ENCODE measurements at regions of chr13 and their contacts with region 1.

Region 1: GRCh38 chr13:92806215-92806614 is 420.4 kb upstream of the GPC6 start:
- DNase-seq: no peak
- H3K4me3 ChIP-seq: no peak overlapping the region
- H3K27ac ChIP-seq: no peak overlapping the region
- H3K4me1 ChIP-seq: peaks cover 3% of the 10 kb centered on the region
- H3K27me3 ChIP-seq: no peaks in the 10 kb centered on the region
- CTCF ChIP-seq: no peak

Region 2: GRCh38 chr13:92716749-92717148 is 89.5 kb before region 1 on chr13:
- CTCF ChIA-PET with region 1: no interaction called
- dilution Hi-C with region 1: no loop called
- in situ Hi-C with region 1: no loop called
- intact Hi-C with region 1: no loop called
- DNase-seq: peak; percentile 2
- H3K4me3 ChIP-seq: no peak overlapping the region
- H3K27ac ChIP-seq: no peak overlapping the region
- H3K4me1 ChIP-seq: no peaks in the 10 kb centered on the region
- H3K27me3 ChIP-seq: no peaks in the 10 kb centered on the region
- CTCF ChIP-seq: peak; percentile 24 to 34

Region 3: GRCh38 chr13:92843549-92843948 is 37.3 kb after region 1 on chr13:
- CTCF ChIA-PET with region 1: no interaction called
- dilution Hi-C with region 1: no loop called
- in situ Hi-C with region 1: no loop called
- intact Hi-C with region 1: loop called (anchors 5 kb)
- DNase-seq: peak; percentile 60
- H3K4me3 ChIP-seq: no peak overlapping the region
- H3K27ac ChIP-seq: no peak overlapping the region
- H3K4me1 ChIP-seq: peaks cover 24% of the 10 kb centered on the region
- H3K27me3 ChIP-seq: no peaks in the 10 kb centered on the region
- CTCF ChIP-seq: no peak